PC-3 (cell line): ENCODE measurements at regions of chr2 and their contacts with region 1.

Region 1: GRCh38 chr2:58571181-58571852 is 330.2 kb upstream of the FANCL start:
- DNase-seq: peak; percentile 86
- ATAC-seq: peak; percentile 87
- H3K4me3 ChIP-seq: no peak overlapping the region
- H3K27ac ChIP-seq: no peak overlapping the region
- H3K4me1 ChIP-seq: peaks cover 21% of the 10 kb centered on the region
- H3K27me3 ChIP-seq: no peaks in the 10 kb centered on the region
- CTCF ChIP-seq: peak; percentile 91

Region 2: GRCh38 chr2:57720728-57721627 is 850.3 kb before region 1 on chr2:
- CTCF ChIA-PET with region 1: no interaction called
- POLR2A ChIA-PET with region 1: no interaction called
- intact Hi-C with region 1: loop called (anchors 2 kb)
- DNase-seq: peak; percentile 76
- ATAC-seq: peak; percentile 97
- H3K4me3 ChIP-seq: peak overlapping the region; percentile 45
- H3K27ac ChIP-seq: no peak overlapping the region
- H3K4me1 ChIP-seq: peaks cover 15% of the 10 kb centered on the region
- H3K27me3 ChIP-seq: no peaks in the 10 kb centered on the region
- CTCF ChIP-seq: peak; percentile 96

Region 3: GRCh38 chr2:57906152-57906732 is 665.1 kb before region 1 on chr2:
- CTCF ChIA-PET with region 1: no interaction called
- POLR2A ChIA-PET with region 1: no interaction called
- intact Hi-C with region 1: loop called (anchors 1 kb)
- DNase-seq: peak; percentile 82
- ATAC-seq: peak; percentile 91
- H3K4me3 ChIP-seq: no peak overlapping the region
- H3K27ac ChIP-seq: no peak overlapping the region
- H3K4me1 ChIP-seq: peaks cover 28% of the 10 kb centered on the region
- H3K27me3 ChIP-seq: no peaks in the 10 kb centered on the region
- CTCF ChIP-seq: peak; percentile 93

Region 4: DNA sequence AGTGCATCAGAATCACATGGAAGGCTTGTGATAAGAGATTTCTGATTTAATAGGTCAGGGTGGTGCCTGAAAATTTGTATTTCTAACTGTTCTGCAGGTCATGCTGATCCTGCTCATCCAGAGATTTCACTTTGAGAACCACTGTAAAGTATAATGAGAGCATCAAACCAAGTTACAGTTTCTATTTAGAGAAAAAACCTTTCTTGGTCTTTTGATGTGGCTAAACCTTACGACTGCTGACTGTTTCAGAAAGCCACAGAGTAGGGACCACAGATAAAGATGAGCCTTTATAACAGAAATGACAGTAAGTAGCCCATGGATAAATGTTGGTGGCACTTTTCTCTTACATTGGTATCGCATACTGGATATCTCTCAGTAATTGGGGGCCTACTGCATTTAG is 220.8 kb before region 1 on chr2:
- CTCF ChIA-PET with region 1: no interaction called
- POLR2A ChIA-PET with region 1: no interaction called
- intact Hi-C with region 1: loop called (anchors 10 kb)
- DNase-seq: no peak
- ATAC-seq: no peak
- H3K4me3 ChIP-seq: no peak overlapping the region
- H3K27ac ChIP-seq: no peak overlapping the region
- H3K4me1 ChIP-seq: no peaks in the 10 kb centered on the region
- H3K27me3 ChIP-seq: no peaks in the 10 kb centered on the region
- CTCF ChIP-seq: no peak

Region 5: DNA sequence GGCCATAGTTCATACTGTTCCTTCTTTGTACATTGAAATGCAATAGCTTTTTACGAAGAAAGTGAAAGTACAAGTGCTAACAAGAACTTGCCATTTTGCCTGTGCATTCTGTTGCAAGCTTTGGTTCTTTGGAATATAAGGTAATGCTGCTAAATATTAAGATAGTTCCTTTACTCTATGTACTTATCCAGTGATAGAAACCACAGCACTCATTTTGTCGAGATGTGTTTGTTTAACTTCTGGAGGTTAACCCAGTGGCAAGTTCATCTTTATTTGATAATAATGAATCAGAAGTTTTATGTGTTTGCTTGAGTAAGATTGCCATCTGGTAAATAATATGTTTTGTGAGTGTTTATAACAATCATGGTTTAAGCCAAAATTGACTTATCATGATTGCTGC is 42.9 kb after region 1 on chr2:
- CTCF ChIA-PET with region 1: no interaction called
- POLR2A ChIA-PET with region 1: no interaction called
- intact Hi-C with region 1: loop called (anchors 2 kb)
- DNase-seq: peak; percentile 93
- ATAC-seq: peak; percentile 96
- H3K4me3 ChIP-seq: peak overlapping the region; percentile 53
- H3K27ac ChIP-seq: peak overlapping the region; percentile 50
- H3K4me1 ChIP-seq: peaks cover 35% of the 10 kb centered on the region
- H3K27me3 ChIP-seq: no peaks in the 10 kb centered on the region
- CTCF ChIP-seq: no peak

Region 6: DNA sequence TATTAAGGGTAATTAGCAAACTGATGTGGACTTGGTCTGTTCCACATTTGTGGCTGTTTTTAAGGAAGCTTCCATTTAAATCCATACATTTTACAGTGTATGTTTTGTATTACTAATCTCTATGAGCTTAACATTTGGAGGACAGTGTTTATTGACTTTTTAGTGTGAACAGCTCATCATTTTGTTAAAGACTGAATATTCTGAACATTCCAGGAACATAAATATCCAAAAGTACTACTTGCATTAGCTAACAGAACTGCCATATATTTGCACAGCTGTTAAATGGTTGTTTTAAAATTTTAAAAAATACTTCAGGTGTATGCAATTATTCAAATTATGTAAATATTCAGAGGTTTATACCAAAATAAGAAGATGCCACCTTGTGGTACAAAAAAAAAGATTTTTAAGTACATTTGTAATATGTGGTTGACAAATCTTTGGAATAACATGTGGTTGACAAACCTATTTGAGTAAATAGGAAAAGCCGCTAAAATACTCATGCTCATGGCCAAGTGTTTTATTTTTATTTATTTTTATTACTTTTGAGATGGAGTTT is 109.5 kb after region 1 on chr2:
- CTCF ChIA-PET with region 1: interaction called, 28 read pairs
- POLR2A ChIA-PET with region 1: interaction called, 3 read pairs
- intact Hi-C with region 1: loop called (anchors 1 kb)
- DNase-seq: peak; percentile 58
- ATAC-seq: peak; percentile 75
- H3K4me3 ChIP-seq: no peak overlapping the region
- H3K27ac ChIP-seq: no peak overlapping the region
- H3K4me1 ChIP-seq: no peaks in the 10 kb centered on the region
- H3K27me3 ChIP-seq: no peaks in the 10 kb centered on the region
- CTCF ChIP-seq: peak; percentile 69

Region 7: DNA sequence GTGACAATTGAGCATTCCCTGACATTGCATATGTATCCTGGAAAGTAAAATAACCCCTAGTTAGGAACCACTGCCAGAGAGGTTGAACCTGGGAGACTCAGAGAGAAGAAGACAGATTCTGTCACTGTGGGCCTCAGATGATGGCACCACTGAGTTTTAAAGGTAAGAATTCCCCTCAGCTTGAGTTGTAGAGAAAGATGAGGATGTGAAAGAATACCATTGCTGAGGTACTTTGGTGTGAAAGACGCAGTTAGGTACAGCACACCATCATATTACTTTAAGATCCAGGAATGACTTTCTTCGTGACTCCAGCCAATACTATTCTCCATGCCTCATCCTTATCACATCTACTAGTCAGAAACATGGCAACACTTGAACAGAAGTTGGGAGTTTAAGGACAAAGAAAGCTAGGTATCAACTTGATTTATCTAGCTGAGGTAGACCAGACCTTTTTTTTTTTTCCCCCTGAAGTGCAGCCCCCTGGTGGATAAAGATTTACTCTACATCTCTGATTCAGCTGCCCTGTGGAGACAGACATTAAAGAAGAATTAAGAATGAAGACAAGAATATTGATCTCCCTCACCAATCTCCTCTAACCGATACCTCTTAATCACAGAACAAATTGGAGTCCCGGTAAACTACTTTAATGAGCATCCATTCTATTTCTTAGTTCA is 300.3 kb after region 1 on chr2:
- CTCF ChIA-PET with region 1: no interaction called
- POLR2A ChIA-PET with region 1: no interaction called
- intact Hi-C with region 1: loop called (anchors 5 kb)
- DNase-seq: peak; percentile 25
- ATAC-seq: no peak
- H3K4me3 ChIP-seq: no peak overlapping the region
- H3K27ac ChIP-seq: no peak overlapping the region
- H3K4me1 ChIP-seq: no peaks in the 10 kb centered on the region
- H3K27me3 ChIP-seq: peaks cover 29% of the 10 kb centered on the region; the same call in 1 of the 2 replicates
- CTCF ChIP-seq: peak; percentile 62